HEK293 (cell line): ENCODE measurements at regions of chr10 and their contacts with region 1.

Region 1: GRCh38 chr10:114304017-114304570 is 65.0 kb downstream of the VWA2 start:
- H3K4me3 ChIP-seq: no peak overlapping the region; the same call in 1 of the 2 replicates
- H3K27ac ChIP-seq: no peak overlapping the region
- H3K4me1 ChIP-seq: no peaks in the 10 kb centered on the region
- CTCF ChIP-seq: peak; percentile 76

Region 2: DNA sequence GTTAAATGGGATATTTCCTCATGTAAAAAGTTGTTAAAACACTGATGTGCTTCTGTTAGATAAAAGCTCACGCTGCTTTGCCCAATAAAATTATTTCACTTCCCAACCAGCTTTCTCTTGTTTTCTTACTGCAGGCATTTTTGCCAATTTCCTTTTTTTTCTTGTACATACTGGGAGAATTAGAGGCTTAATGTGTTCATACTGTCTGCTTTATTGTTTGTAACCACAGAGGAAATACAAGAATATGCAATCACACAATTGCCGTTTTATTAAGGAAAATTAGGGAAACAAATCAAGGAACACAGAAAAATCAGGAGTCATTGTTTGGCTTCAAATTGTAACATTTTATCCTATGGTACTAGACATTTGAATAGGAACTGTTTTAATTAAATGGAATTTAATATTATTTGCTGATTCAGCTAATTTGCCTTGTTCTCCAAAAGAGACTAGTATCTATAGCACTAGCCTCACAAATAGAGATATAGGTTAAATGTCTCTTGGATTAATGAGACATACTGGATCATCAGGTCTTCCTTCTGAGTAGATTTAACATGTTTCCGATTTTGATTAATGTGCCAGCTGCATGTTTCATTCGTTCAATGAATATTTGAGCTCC is 71.4 kb before region 1 on chr10:
- CTCF ChIA-PET with region 1: interaction called, 10 read pairs
- POLR2A ChIA-PET with region 1: no interaction called
- H3K4me3 ChIP-seq: no peak overlapping the region
- H3K27ac ChIP-seq: no peak overlapping the region
- H3K4me1 ChIP-seq: 0 out of 2 replicates have a peak, but pooled peaks cover 3% of the 10 kb centered on the region
- CTCF ChIP-seq: no peak

Region 3: GRCh38 chr10:114252092-114252491 is 52.0 kb before region 1 on chr10:
- CTCF ChIA-PET with region 1: no interaction called
- POLR2A ChIA-PET with region 1: no interaction called
- H3K4me3 ChIP-seq: no peak overlapping the region
- H3K27ac ChIP-seq: no peak overlapping the region
- H3K4me1 ChIP-seq: no peaks in the 10 kb centered on the region
- CTCF ChIP-seq: no peak

Region 4: DNA sequence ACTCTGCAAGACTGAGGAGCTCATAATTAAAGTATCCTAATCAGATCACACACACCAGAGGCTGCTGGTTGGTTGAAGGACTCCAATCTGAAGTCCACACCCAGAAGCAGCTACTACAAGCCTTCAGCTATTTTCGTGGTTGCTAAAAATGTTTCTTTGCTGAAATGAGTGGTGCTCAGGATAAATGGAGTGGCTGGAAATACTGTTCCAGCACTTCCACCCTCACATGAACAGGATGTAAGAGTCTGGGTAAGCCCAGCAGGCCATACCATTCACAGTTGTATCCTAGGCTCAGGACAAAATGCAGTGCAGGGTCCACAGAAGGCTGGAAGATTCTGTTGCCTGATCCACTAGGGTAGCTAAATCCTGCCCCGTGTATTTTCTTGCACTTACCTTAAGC is 66.1 kb after region 1 on chr10:
- CTCF ChIA-PET with region 1: interaction called, 13 read pairs
- POLR2A ChIA-PET with region 1: interaction called, 3 read pairs
- H3K4me3 ChIP-seq: no peak overlapping the region
- H3K27ac ChIP-seq: no peak overlapping the region
- H3K4me1 ChIP-seq: peaks cover 10% of the 10 kb centered on the region; the same call in 1 of the 2 replicates
- CTCF ChIP-seq: no peak

Region 5: DNA sequence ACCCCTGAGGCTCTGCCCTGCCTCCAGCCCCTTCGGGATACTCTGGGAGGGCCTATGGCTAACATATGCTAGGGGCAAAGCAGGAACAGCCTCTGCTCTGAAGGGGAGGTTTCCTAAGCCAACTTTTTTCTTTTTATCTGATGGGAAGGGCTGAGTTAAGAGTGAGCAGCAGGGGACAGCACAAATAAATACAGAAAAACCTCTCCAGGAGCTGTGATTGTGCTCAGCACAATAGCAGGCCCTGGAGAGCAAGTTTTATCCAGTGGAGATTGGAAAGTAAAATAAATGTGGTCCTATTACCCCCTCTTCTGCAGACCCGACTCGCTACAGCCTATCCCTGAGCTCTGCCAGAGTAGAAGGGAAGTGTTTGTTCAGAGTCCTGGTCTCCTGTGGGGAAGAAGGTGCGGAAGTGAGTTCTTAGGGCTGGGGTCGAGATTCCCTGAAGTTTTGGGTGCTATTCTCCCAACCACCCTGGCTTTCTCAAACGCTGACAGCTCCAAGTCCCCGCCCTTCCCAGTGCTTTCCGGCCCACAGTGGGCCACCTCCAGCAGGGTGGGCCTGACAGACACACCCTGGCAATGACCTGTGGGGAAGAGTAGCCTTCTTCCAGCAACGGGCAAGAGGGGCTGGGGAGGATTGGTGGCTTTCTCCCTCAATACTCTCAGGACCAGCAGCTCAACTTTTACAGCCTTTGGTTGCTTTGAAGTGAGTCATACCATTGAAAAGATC is 123.2 kb after region 1 on chr10:
- CTCF ChIA-PET with region 1: interaction called, 11 read pairs
- POLR2A ChIA-PET with region 1: no interaction called
- H3K4me3 ChIP-seq: no peak overlapping the region
- H3K27ac ChIP-seq: no peak overlapping the region
- H3K4me1 ChIP-seq: no peaks in the 10 kb centered on the region
- CTCF ChIP-seq: no peak

Region 6: GRCh38 chr10:114448897-114449296 is 144.8 kb after region 1 on chr10:
- CTCF ChIA-PET with region 1: interaction called, 20 read pairs
- POLR2A ChIA-PET with region 1: no interaction called
- H3K4me3 ChIP-seq: no peak overlapping the region
- H3K27ac ChIP-seq: no peak overlapping the region
- H3K4me1 ChIP-seq: no peaks in the 10 kb centered on the region
- CTCF ChIP-seq: no peak

Region 7: GRCh38 chr10:114470956-114471905 is 167.1 kb after region 1 on chr10:
- CTCF ChIA-PET with region 1: interaction called, 17 read pairs
- POLR2A ChIA-PET with region 1: no interaction called
- H3K4me3 ChIP-seq: no peak overlapping the region
- H3K27ac ChIP-seq: no peak overlapping the region
- H3K4me1 ChIP-seq: no peaks in the 10 kb centered on the region
- CTCF ChIP-seq: 0 out of 2 replicates have a peak, but pooled peaks have one; percentile 26